ENCODE measurements at regions of chr14 and their contacts with region 1.

Region 1: DNA sequence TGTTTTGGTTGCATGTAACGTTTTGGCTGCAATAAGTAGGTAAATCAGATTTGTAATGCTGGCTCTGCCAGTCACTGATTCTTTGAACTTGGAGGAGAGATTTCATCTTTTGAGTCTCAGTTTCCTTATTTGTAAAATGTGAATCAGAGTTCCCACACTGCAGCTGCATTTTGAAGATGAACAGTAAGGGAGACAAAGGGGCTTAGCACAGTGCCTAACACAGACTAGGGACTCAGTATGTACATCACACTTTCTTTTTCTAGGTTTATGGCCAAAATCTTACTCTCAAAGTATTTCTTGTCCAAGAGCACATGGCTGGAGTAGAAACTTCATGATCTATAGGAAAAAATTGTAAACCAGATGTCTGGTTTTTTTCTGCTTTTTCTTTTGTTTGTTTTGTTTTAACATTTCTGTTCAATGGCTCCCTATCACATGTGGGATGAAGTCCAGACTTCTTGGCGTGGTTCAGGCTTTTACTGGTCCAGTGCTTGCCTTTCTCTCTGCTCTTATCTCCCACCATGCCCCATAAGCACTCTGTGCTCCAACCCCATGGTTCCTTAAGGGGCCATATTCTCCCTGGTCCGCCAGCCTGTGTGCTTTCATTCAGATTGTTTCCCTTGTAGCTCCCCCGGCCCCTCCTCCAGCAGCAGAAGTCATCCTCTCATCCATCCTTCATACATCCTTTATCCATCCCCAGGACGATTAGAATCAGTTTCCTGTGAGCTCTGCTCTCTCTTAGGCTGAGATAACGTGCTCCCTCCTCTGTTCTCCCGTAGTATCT is 58.0 kb downstream of the SYNE2 start:
- DNase-seq: peak; percentile 54
- H3K4me3 Mint-ChIP-seq: peak overlapping the region; percentile 0
- H3K27ac Mint-ChIP-seq: peak overlapping the region; percentile 37
- H3K4me1 Mint-ChIP-seq: peaks cover 46% of the 10 kb centered on the region
- H3K27me3 Mint-ChIP-seq: no peaks in the 10 kb centered on the region

Region 2: DNA sequence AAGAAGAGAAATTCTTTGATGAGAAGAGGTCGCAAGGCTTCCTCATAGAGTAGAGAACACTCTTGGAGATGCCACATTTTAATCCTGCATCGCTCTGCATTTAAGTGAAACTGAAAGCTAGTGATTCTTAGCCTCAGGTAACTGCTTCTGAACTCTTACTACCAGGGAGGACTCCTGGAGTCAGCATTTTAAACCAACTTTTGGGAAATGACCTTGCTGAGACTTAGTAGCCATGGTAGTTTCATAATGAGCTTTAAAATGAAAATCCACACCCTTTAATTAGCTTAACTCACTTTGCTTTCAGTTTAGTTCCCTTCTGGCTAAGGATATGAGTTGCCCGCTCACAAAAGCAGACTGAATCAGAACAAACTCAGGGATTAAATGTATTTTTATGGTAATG is 22.3 kb after region 1 on chr14:
- CTCF ChIA-PET with region 1: no interaction called
- intact Hi-C with region 1: loop called (anchors 1 kb)
- DNase-seq: peak; percentile 8
- H3K4me3 Mint-ChIP-seq: no peak overlapping the region
- H3K27ac Mint-ChIP-seq: peak overlapping the region; percentile 2
- H3K4me1 Mint-ChIP-seq: peaks cover 19% of the 10 kb centered on the region
- H3K27me3 Mint-ChIP-seq: no peaks in the 10 kb centered on the region

Region 3: DNA sequence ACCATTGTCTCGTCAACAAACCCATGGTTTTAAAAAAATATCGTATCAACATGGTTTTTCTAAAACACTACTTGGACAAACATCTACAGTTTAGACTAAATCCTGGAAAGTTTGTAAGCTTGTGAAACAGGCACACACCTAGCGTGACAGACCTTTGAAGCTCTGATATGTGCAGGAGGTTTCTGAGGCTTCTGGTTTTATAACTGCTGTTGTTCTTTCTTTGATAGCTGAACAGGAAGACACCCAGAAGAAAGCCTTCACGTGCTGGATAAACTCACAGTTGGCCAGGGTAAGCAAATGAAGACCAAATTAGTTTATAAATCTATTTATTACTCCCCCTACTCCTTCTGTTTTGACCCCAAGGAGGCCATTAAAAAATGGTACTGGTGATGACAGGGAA is 29.6 kb after region 1 on chr14:
- CTCF ChIA-PET with region 1: no interaction called
- intact Hi-C with region 1: loop called (anchors 2 kb)
- DNase-seq: peak; percentile 38
- H3K4me3 Mint-ChIP-seq: peak overlapping the region; percentile 3
- H3K27ac Mint-ChIP-seq: peak overlapping the region; percentile 33
- H3K4me1 Mint-ChIP-seq: peaks cover 22% of the 10 kb centered on the region
- H3K27me3 Mint-ChIP-seq: no peaks in the 10 kb centered on the region